CD8-positive, alpha-beta T cell (primary cell): ENCODE measurements at regions of chr11 and their contacts with region 1.

Region 1: DNA sequence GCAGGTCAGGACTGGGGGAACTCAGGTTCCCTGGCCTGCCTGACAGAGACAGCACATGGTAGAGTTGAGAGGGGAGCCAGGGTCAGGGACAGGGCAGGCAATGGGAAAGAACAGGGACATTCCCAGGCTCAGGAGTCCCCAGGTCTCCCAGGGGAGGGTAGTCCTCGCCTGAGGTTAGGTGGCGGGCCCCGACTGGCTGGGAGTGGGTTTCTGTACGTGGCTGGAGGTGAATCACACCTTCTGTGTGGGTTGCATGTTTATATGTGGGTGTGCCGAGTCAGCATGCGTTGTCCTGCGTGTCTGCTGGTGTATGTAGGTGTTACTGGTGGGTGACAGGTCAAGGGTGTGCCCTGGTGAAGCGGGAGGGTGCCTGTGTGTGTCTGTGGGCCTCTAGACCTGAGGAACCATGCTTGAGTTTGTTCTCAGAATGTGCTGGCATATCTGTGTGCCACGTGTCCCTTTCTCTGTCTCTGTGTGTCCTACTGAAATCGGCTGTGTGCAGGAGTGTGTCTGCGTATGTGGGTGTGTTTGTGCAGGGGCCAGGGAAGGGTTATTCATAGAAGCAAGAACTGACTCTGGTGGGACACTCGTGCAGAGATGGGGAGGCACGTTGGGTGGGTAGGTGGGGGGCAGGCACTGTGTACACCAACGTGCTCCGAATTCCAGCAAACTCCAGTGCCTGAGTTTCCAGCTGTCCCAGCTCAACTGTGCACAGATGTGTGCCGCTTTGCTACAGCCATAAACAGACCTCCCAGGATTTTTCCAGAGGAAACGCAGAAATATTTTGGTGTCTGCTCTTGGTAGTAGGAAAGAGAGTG is 23.8 kb upstream of the OAF start:
- DNase-seq: no peak
- ATAC-seq: no peak
- H3K4me3 ChIP-seq: no peak overlapping the region
- H3K4me3 Mint-ChIP-seq: no peak overlapping the region
- H3K27ac ChIP-seq: no peak overlapping the region
- H3K27ac Mint-ChIP-seq: no peak overlapping the region
- H3K4me1 ChIP-seq: no peaks in the 10 kb centered on the region
- H3K4me1 Mint-ChIP-seq: no peaks in the 10 kb centered on the region
- H3K27me3 ChIP-seq: peaks cover 0 to 2% of the 10 kb centered on the region in 2 experiments
- H3K27me3 Mint-ChIP-seq: peaks cover 15% of the 10 kb centered on the region
- CTCF ChIP-seq: no peak

Region 2: GRCh38 chr11:120229451-120230424 is 42.8 kb after region 1 on chr11:
- CTCF ChIA-PET with region 1: interaction called, 6 read pairs
- POLR2A ChIA-PET with region 1: no interaction called
- intact Hi-C with region 1: loop called in 1 of 2 experiments (anchors 5 kb)
- DNase-seq: peak in 3 of 9 experiments; percentile 13 to 43 (median 36)
- ATAC-seq: no peak
- H3K4me3 ChIP-seq: no peak overlapping the region
- H3K4me3 Mint-ChIP-seq: no peak overlapping the region
- H3K27ac ChIP-seq: no peak overlapping the region
- H3K27ac Mint-ChIP-seq: no peak overlapping the region
- H3K4me1 ChIP-seq: peaks cover 4% of the 10 kb centered on the region
- H3K4me1 Mint-ChIP-seq: peaks cover 6% of the 10 kb centered on the region
- H3K27me3 ChIP-seq: peaks cover 0 to under 1% of the 10 kb centered on the region in 2 experiments
- H3K27me3 Mint-ChIP-seq: peaks cover 6% of the 10 kb centered on the region
- CTCF ChIP-seq: peak; percentile 48